Activated naive CD4-positive, alpha-beta T cell treated with anti-CD3 and anti-CD28 coated beads for 36 hours (primary cell): ENCODE measurements at regions of chr1 and their contacts with region 1.

Region 1: DNA sequence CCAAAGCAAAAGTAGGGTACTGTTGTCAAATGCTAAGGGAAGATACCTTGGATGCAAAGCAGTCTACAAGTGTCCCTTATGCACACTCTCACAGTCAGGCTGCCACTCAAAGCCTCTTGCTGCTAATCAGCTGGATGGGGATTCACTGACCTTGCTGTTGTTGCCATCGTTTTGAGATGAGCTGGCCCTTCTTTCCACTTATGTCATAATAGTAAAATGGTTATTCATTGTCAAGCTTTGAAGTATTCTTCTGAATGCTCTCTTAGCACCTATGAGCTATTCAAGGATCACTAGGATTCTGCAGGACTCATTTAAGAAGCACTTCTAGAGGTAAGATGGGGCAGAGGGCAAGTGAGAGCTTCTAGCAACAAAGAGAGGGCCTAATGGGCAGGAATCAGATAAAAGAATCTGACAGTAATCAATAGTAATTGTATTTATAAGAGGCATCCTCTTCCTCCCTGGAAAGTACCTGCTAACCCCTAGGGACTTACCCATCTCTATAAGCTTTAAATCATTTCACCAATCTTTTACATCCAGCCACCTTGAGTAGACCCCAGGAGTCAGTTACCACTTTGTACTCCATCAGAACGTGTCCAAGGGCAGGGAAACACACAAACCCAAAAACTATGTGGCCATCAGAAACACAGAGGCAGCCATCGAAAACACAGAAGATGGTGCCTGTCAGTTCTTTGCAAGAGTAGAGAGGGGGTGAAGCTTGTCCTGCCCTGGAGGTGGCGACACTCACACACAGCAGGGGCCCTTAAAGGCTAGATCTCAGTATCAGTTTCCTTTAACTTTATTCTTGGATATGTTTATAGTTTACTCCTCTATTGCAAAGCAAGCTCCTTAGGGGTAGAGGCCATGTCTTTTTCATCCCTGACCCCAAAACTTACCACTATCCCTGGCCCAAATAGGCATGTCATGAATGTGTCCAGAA is 103.7 kb upstream of the NFIA start:
- DNase-seq: peak; percentile 57
- H3K4me3 Mint-ChIP-seq: no peak overlapping the region
- H3K27ac Mint-ChIP-seq: no peak overlapping the region
- H3K4me1 Mint-ChIP-seq: peaks cover 2% of the 10 kb centered on the region
- H3K27me3 Mint-ChIP-seq: no peaks in the 10 kb centered on the region

Region 2: GRCh38 chr1:61337981-61338848 is 359.5 kb after region 1 on chr1:
- CTCF ChIA-PET with region 1: no interaction called
- intact Hi-C with region 1: loop called (anchors 10 kb)
- DNase-seq: no peak
- H3K4me3 Mint-ChIP-seq: no peak overlapping the region
- H3K27ac Mint-ChIP-seq: no peak overlapping the region
- H3K4me1 Mint-ChIP-seq: no peaks in the 10 kb centered on the region
- H3K27me3 Mint-ChIP-seq: peaks cover under 1% of the 10 kb centered on the region

Region 3: GRCh38 chr1:61588736-61589672 is 610.3 kb after region 1 on chr1:
- CTCF ChIA-PET with region 1: interaction called, 6 read pairs
- intact Hi-C with region 1: loop called (anchors 2 kb)
- DNase-seq: peak; percentile 79
- H3K4me3 Mint-ChIP-seq: no peak overlapping the region
- H3K27ac Mint-ChIP-seq: no peak overlapping the region
- H3K4me1 Mint-ChIP-seq: no peaks in the 10 kb centered on the region
- H3K27me3 Mint-ChIP-seq: peaks cover 4% of the 10 kb centered on the region

Region 4: GRCh38 chr1:61641578-61642336 is 663.1 kb after region 1 on chr1:
- CTCF ChIA-PET with region 1: no interaction called
- intact Hi-C with region 1: loop called (anchors 2 kb)
- DNase-seq: peak; percentile 84
- H3K4me3 Mint-ChIP-seq: peak overlapping the region; percentile 68
- H3K27ac Mint-ChIP-seq: peak overlapping the region; percentile 38
- H3K4me1 Mint-ChIP-seq: peaks cover 10% of the 10 kb centered on the region
- H3K27me3 Mint-ChIP-seq: peaks cover 3% of the 10 kb centered on the region